Heart right ventricle (tissue), 16 donors: ENCODE measurements at regions of chr5 and their contacts with region 1.

Region 1: GRCh38 chr5:113474100-113474728 is 14.0 kb downstream of the MCC start:
- DNase-seq: no peak
- ATAC-seq: peak in 2 of 8 donors; percentile 53 to 62
- H3K4me3 ChIP-seq: no peak overlapping the region
- H3K27ac ChIP-seq: no peak overlapping the region
- H3K4me1 ChIP-seq: peaks cover 0 to 9% (median 0%) of the 10 kb centered on the region in 9 donors
- H3K27me3 ChIP-seq: peaks cover 0 to 44% (median 0%) of the 10 kb centered on the region in 7 donors
- CTCF ChIP-seq: no peak

Region 2: DNA sequence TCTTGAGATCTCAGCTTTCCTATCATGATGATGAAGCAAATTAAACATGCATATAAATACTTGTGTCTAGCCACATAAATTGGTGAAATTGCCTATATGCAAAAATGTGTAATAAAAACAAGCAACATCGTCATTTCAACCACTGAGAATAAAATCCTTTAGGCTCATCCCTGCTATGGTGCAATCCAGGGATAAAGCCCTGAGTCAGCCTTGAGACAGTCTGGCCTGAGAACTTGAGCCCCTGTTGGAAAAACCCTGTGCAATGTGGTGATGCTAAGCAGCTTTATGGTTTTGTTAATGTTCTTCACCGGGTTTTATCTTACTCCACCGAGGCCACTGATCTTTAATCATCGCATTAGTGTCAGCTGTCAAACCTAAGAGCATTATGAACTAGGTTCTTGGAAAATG is 327.1 kb before region 1 on chr5:
- intact Hi-C with region 1: no loop called
- DNase-seq: no peak
- ATAC-seq: peak in 1 of 8 donors; percentile 61
- H3K4me3 ChIP-seq: no peak overlapping the region
- H3K27ac ChIP-seq: no peak overlapping the region
- H3K4me1 ChIP-seq: peaks cover 0 to 41% (median 26%) of the 10 kb centered on the region in 9 donors
- H3K27me3 ChIP-seq: no peaks in the 10 kb centered on the region
- CTCF ChIP-seq: no peak

Region 3: DNA sequence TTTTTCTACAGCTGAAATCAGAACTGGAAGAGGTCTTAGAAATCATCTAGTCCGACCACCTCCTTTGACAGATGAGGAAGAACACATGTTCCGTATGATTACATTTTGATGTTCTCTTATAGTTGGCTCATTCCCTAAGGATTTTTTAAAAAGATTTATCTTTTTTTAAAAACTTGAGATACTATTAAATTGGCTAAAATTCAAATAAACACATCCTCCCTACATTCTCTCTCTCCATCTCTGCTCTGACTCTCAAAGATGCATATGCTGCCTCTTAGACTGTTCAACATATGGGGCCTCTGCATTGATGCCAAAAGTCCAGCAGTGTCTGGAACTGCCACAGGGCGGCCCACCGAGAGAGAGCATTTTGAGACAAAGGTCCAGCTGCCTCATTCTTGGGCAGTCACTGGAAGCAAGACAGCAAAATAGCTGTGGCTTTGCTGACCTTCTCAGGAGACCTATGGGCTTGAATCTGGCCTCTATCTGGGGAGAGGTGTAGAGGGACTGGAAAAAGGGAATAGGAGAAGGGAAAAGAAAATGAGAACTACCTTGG is 26.6 kb before region 1 on chr5:
- intact Hi-C with region 1: loop called in 1 of 10 experiments (anchors 1 kb)
- DNase-seq: no peak
- ATAC-seq: no peak
- H3K4me3 ChIP-seq: no peak overlapping the region
- H3K27ac ChIP-seq: no peak overlapping the region
- H3K4me1 ChIP-seq: peaks cover 0 to 10% (median 0%) of the 10 kb centered on the region in 9 donors
- H3K27me3 ChIP-seq: peaks cover 0 to 6% (median 0%) of the 10 kb centered on the region in 7 donors
- CTCF ChIP-seq: no peak